Activated CD4-positive, alpha-beta T cell treated with anti-CD3 and anti-CD28 coated beads for 36 hours (primary cell): ENCODE measurements at regions of chr3 and their contacts with region 1.

Region 1: DNA sequence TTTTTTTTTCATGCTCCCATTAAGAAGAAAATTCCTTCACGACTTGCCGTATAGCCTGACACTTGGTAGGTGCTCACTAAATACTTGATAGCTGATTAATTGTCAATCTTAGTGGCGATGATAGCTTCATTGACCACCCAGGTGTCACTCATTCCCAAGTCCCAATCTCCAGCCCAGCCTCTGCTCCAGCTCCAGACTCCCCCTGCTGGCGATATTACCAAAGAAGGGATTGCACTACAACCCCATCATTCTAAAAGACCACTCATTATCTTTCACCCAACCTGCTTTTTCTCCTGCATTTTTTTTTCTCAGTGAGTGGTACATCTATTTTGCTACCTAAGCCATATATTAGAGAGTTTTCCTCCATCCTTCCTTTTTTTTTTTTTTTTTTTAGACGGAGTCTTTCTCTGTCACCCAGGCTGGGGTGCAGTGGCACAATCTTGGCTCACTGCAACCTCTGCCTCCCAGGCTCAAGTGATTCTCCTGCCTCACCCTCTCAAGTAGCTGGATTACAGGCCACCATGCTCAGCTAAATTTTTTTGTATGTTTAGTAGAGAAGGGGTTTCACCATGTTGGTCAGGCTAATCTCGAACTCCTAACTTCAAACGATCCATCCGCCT is 19.5 kb upstream of the COMMD2 start:
- DNase-seq: peak; percentile 65
- ATAC-seq: peak; percentile 49
- H3K4me3 Mint-ChIP-seq: no peak overlapping the region
- H3K27ac Mint-ChIP-seq: no peak overlapping the region
- H3K4me1 Mint-ChIP-seq: no peaks in the 10 kb centered on the region
- H3K27me3 Mint-ChIP-seq: peaks cover 11% of the 10 kb centered on the region

Region 2: GRCh38 chr3:149424918-149425317 is 346.8 kb before region 1 on chr3:
- CTCF ChIA-PET with region 1: no interaction called
- POLR2A ChIA-PET with region 1: no interaction called
- intact Hi-C with region 1: no loop called
- DNase-seq: no peak
- ATAC-seq: no peak
- H3K4me3 Mint-ChIP-seq: no peak overlapping the region
- H3K27ac Mint-ChIP-seq: no peak overlapping the region
- H3K4me1 Mint-ChIP-seq: no peaks in the 10 kb centered on the region
- H3K27me3 Mint-ChIP-seq: peaks cover 6% of the 10 kb centered on the region

Region 3: DNA sequence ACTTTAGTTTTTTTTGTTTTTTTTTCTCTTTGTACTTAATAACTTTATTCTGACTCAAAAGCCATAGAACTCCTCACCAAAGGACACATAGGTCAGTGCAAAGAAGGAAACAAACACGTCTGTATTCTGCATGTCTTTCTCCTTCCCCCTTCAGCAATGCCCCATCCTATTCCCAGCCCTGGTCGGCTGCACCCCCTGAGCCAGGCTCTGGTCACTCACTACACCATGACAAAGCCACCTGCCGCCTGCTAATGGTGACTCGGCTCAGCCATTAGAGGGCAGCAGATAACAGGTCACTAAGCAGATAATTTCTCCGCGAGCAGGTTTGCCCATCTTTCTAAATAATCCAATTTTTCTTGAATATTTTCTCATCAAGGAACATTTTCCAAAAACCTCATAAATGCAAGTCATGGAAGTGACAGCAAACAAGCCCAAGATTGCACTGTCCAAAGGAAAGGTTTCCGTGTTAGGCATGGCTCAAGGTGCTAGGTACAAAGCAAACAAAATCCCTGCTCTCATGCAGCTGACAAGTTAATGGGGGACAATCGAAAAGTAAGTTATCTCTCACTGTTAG is 259.5 kb before region 1 on chr3:
- CTCF ChIA-PET with region 1: interaction called, 5 read pairs
- POLR2A ChIA-PET with region 1: no interaction called
- intact Hi-C with region 1: loop called (anchors 1 kb)
- DNase-seq: peak; percentile 56
- ATAC-seq: peak; percentile 57
- H3K4me3 Mint-ChIP-seq: no peak overlapping the region
- H3K27ac Mint-ChIP-seq: no peak overlapping the region
- H3K4me1 Mint-ChIP-seq: peaks cover 17% of the 10 kb centered on the region
- H3K27me3 Mint-ChIP-seq: peaks cover 17% of the 10 kb centered on the region

Region 4: GRCh38 chr3:149570016-149570415 is 201.7 kb before region 1 on chr3:
- CTCF ChIA-PET with region 1: interaction called, 22 read pairs
- POLR2A ChIA-PET with region 1: no interaction called
- intact Hi-C with region 1: loop called (anchors 1 kb)
- DNase-seq: no peak
- ATAC-seq: no peak
- H3K4me3 Mint-ChIP-seq: no peak overlapping the region
- H3K27ac Mint-ChIP-seq: no peak overlapping the region
- H3K4me1 Mint-ChIP-seq: peaks cover 8% of the 10 kb centered on the region
- H3K27me3 Mint-ChIP-seq: no peaks in the 10 kb centered on the region

Region 5: GRCh38 chr3:149783576-149783975 is 11.8 kb after region 1 on chr3:
- CTCF ChIA-PET with region 1: interaction called, 10 read pairs
- POLR2A ChIA-PET with region 1: no interaction called
- intact Hi-C with region 1: no loop called
- DNase-seq: no peak
- ATAC-seq: no peak
- H3K4me3 Mint-ChIP-seq: no peak overlapping the region
- H3K27ac Mint-ChIP-seq: no peak overlapping the region
- H3K4me1 Mint-ChIP-seq: no peaks in the 10 kb centered on the region
- H3K27me3 Mint-ChIP-seq: peaks cover 7% of the 10 kb centered on the region

Region 6: GRCh38 chr3:149990423-149990948 is 218.7 kb after region 1 on chr3:
- CTCF ChIA-PET with region 1: no interaction called
- POLR2A ChIA-PET with region 1: no interaction called
- intact Hi-C with region 1: no loop called
- DNase-seq: no peak
- ATAC-seq: no peak
- H3K4me3 Mint-ChIP-seq: no peak overlapping the region
- H3K27ac Mint-ChIP-seq: no peak overlapping the region
- H3K4me1 Mint-ChIP-seq: no peaks in the 10 kb centered on the region
- H3K27me3 Mint-ChIP-seq: peaks cover 15% of the 10 kb centered on the region

Region 7: DNA sequence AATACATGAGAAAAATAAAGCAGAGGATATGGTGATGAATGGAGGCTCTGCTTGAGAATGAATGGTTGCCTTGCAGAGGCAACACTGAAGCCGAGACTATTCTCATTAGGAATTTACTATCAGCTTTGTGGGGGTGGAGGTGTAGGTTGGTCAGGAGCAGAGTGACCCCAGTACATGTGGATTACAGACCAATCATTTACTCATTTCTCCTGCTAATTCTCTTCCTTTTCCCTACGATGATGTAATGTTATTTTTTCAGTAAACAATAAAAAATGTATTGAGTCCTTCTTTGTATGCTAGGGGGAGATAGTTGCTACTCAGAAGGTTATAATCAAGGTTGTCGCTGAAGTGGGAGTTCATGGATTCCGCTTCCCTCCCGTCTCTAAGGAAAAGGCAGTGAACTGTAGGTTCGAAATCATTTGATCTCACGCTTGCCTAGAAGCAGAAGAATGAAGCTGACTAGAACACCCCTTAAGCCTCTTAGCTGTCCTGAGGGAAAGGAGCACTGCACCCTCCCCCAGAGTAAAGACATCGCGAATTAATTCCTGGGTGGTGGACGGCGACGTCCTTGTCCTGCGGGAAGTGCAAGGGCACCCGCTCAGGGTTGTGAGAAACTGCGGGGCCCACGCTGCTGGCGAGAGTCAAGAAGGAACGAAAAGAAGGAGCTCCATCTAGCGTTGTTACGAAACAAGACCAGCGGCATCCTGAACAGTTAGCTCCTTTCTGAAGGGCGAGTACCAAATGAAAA is 412.1 kb after region 1 on chr3:
- CTCF ChIA-PET with region 1: no interaction called
- POLR2A ChIA-PET with region 1: no interaction called
- intact Hi-C with region 1: loop called in 1 of 2 experiments (anchors 10 kb)
- DNase-seq: peak; percentile 71
- ATAC-seq: peak; percentile 95
- H3K4me3 Mint-ChIP-seq: no peak overlapping the region
- H3K27ac Mint-ChIP-seq: no peak overlapping the region
- H3K4me1 Mint-ChIP-seq: no peaks in the 10 kb centered on the region
- H3K27me3 Mint-ChIP-seq: peaks cover 26% of the 10 kb centered on the region

Region 8: GRCh38 chr3:150610790-150611189 is 839.0 kb after region 1 on chr3:
- CTCF ChIA-PET with region 1: no interaction called
- POLR2A ChIA-PET with region 1: no interaction called
- intact Hi-C with region 1: no loop called
- DNase-seq: no peak
- ATAC-seq: no peak
- H3K4me3 Mint-ChIP-seq: no peak overlapping the region
- H3K27ac Mint-ChIP-seq: no peak overlapping the region
- H3K4me1 Mint-ChIP-seq: peaks cover 75% of the 10 kb centered on the region
- H3K27me3 Mint-ChIP-seq: no peaks in the 10 kb centered on the region